Right cardiac atrium (tissue), 5 donors: ENCODE measurements at regions of chr10 and their contacts with region 1.

Region 1: DNA sequence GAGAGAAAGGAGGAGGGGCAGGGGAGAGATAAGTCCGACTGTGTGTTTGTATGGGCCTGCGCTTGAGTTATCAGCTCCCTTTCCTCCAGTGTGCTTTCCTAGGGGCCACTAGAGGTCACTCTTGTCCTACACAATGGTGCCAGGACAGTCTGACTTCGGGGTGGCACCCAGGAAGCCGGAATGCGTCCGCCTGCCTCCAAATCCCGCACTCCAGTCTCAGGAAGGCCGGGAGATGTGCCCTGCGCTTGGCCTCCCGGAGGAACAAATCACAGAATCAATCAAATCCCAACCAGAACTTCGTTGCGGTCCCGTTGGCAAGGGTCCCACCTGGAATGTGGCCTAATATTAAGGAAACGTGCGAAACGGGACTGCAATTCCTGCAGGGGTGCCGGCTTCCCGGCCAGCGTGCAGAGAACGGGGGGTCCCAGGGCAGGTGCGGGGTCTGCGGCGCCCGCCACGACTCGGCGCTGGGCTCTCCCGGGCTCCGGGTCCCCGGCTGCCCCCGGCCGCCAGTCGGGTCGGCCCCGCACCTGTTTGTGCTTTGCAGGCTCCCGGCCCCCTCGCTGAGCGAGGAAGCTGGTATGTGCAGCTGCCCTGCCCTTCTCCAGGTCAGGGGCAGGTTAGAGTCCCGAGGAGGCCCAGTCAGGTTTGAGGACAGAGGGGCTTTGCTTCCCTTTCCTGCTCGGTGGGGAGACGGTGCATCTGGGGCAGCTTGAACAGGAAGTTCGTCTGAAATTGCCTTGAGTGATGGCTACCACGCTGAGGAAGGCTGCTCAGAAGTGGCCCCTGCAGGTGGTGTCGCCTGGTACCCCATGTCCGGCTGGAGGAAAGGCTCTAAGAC is 21.0 kb upstream of the HPS1 start:
- DNase-seq: peak; percentile 66 to 85 (median 80)
- ATAC-seq: peak; percentile 95 to 96
- H3K4me3 ChIP-seq: peak overlapping the region; percentile 48
- H3K27ac ChIP-seq: no peak overlapping the region
- H3K4me1 ChIP-seq: no peaks in the 10 kb centered on the region
- H3K27me3 ChIP-seq: no peaks in the 10 kb centered on the region

Region 2: GRCh38 chr10:98088186-98088971 is 379.3 kb before region 1 on chr10:
- intact Hi-C with region 1: no loop called
- DNase-seq: peak in 1 of 3 donors; percentile 55
- ATAC-seq: peak; percentile 76
- H3K4me3 ChIP-seq: no peak overlapping the region
- H3K27ac ChIP-seq: no peak overlapping the region
- H3K4me1 ChIP-seq: no peaks in the 10 kb centered on the region
- H3K27me3 ChIP-seq: no peaks in the 10 kb centered on the region

Region 3: DNA sequence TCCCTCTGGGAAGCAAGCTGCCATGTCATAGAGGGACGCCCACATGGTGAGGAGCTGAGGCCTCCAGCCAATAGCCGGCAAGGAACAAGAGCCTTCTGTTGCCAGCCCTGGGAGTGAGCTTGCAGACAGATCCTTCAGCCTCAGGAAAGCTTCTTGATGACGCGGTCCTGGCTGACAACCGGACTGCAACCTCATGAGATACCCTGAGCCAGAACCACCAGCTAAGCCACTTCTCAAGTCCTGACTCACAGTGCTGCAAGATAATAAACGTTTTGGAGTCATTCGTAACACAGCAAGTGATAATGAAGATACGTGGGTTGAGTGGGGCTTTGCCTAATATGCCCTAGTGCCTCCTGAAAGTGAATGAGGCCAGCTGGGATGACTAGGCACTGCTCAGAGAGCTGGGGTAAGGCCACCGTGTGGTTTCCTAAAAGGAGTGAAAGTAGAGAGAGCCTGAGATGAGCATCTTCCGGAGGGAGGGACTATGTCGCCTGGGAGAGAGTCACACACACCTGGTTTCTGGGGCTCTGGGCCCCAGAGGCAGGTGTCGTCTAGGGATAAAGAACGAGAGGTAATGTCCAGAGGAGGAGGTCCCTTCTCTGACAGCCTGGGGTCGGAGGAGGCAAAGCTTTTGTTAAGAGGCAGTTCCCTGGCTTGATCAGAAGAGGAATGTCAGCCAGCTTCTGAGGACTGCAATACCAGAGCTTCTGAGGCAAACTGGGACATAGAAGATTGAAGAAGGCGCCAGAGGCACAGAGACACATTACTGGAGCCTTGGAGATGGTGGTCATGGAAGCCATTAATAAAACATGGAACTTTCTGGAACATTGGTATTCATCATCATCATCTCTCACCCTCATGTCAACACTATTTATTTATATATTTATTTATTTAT is 106.3 kb before region 1 on chr10:
- intact Hi-C with region 1: no loop called
- DNase-seq: peak; percentile 92 to 94 (median 93)
- ATAC-seq: peak; percentile 96 to 97
- H3K4me3 ChIP-seq: no peak overlapping the region
- H3K27ac ChIP-seq: peak overlapping the region; percentile 90
- H3K4me1 ChIP-seq: peaks cover 5% of the 10 kb centered on the region
- H3K27me3 ChIP-seq: no peaks in the 10 kb centered on the region

Region 4: GRCh38 chr10:98664331-98665042 is 196.8 kb after region 1 on chr10:
- intact Hi-C with region 1: loop called in 1 of 4 experiments (anchors 10 kb)
- DNase-seq: no peak
- ATAC-seq: no peak
- H3K4me3 ChIP-seq: no peak overlapping the region
- H3K27ac ChIP-seq: no peak overlapping the region
- H3K4me1 ChIP-seq: no peaks in the 10 kb centered on the region
- H3K27me3 ChIP-seq: no peaks in the 10 kb centered on the region

Region 5: GRCh38 chr10:99248824-99249223 is 781.1 kb after region 1 on chr10:
- intact Hi-C with region 1: loop called (anchors 5 kb)
- DNase-seq: no peak
- ATAC-seq: no peak
- H3K4me3 ChIP-seq: no peak overlapping the region
- H3K27ac ChIP-seq: no peak overlapping the region
- H3K4me1 ChIP-seq: no peaks in the 10 kb centered on the region
- H3K27me3 ChIP-seq: no peaks in the 10 kb centered on the region

Region 6: DNA sequence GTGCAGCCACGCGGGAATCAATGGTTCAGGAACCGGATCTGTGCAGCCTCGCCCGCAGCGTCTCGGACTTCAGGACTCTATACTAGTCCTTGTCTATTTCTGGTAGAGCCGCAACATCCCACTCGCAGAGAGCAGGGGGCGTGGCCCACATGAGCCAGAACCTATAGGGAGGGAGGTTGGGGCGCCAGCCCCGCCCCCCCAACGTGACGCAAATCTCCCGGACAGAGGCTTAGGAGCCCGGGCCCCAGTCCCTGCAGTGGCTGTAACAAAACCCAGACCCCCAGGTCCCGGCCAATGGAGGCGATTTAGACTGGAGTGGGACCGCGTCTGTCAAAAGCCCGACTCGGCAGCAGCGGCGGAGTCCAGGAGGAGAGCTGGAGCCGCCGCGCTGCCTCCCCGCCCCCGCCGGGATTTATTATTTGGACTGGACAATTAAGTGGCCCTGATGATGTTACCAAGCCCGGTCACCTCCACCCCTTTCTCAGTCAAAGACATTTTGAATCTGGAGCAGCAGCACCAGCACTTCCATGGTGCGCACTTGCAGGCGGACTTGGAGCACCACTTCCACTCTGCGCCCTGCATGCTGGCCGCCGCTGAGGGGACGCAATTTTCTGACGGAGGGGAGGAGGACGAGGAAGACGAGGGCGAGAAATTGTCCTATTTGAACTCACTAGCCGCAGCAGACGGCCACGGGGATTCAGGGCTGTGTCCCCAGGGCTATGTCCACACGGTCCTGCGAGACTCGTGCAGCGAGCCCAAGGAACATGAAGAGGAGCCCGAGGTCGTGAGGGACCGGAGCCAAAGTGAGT is 1065.2 kb after region 1 on chr10 and contains the start of gene NKX2-3:
- intact Hi-C with region 1: no loop called
- DNase-seq: peak; percentile 59 to 77 (median 73)
- ATAC-seq: peak; percentile 25 to 56
- H3K4me3 ChIP-seq: peak within 1 kb of the TSS; percentile 4
- H3K27ac ChIP-seq: no peak within 1 kb of the TSS
- H3K4me1 ChIP-seq: peaks cover 8% of the 10 kb centered on the region
- H3K27me3 ChIP-seq: no peaks in the 10 kb centered on the region
- total RNA-seq, gene NKX2-3: not detected